ENCODE measurements at regions of chr3 and their contacts with region 1.

Region 1: GRCh38 chr3:118884748-118885206 is 149.9 kb downstream of the IGSF11 start:
- DNase-seq: peak; percentile 18
- ATAC-seq: peak; percentile 96
- H3K4me3 ChIP-seq: no peak overlapping the region
- H3K27ac ChIP-seq: no peak overlapping the region
- H3K4me1 ChIP-seq: no peaks in the 10 kb centered on the region
- H3K27me3 ChIP-seq: peaks cover 0 to 4% of the 10 kb centered on the region in 2 experiments; a peak in 1 of 5 replicates
- CTCF ChIP-seq: peak; percentile 72
- EP300 ChIP-seq: no peak
- POLR2A ChIP-seq: no peak
- RAD21 ChIP-seq: no peak

Region 2: GRCh38 chr3:118997190-118997589 is 112.4 kb after region 1 on chr3:
- CTCF ChIA-PET with region 1: no interaction called
- POLR2A ChIA-PET with region 1: no interaction called
- in situ Hi-C with region 1: no loop called
- intact Hi-C with region 1: no loop called
- DNase-seq: no peak
- ATAC-seq: no peak
- H3K4me3 ChIP-seq: no peak overlapping the region
- H3K27ac ChIP-seq: no peak overlapping the region
- H3K4me1 ChIP-seq: no peaks in the 10 kb centered on the region
- H3K27me3 ChIP-seq: no peaks in the 10 kb centered on the region
- CTCF ChIP-seq: no peak
- EP300 ChIP-seq: no peak
- POLR2A ChIP-seq: no peak
- RAD21 ChIP-seq: no peak

Region 3: DNA sequence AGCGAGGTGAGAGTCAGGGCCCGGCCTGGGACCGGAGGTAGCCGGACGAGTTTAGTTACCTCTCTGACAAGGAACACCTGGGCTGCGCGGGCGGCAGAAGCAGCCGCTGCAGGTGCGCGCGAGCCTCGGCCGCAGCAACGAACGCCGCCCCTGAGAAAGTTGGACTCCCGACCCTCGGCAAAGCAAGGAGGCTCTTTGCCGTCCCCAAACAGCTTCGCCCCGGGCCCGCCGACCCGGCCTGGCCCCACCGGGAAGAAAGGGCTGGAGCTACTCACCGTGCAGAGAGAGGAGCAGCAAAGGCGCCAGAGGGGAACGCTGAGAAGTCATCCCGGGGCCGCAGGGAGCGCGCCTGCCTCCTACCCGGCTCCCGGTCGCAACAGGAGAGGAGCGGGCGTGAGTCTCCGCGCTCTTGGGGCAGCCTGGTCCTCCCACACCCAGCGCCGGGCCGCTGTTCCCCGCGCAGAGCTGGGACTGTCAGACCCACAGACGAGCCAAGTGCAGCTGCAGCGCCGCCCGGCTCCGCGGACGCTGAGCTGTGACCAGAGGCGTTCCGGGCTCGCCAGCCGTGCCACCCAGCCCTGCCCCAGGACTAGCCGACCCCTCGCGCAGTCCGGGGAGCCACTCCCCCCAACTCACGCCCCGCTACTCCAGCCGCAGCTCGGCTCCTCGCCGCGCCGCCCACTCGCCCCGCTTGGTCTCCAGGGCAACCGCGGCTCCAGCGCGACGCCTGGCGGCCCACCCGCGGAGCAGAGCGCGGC is 149.7 kb after region 1 on chr3 and contains the start of gene IGSF11:
- CTCF ChIA-PET with region 1: interaction called, 5 read pairs
- POLR2A ChIA-PET with region 1: interaction called, 3 read pairs
- in situ Hi-C with region 1: loop called (anchors 10 kb)
- intact Hi-C with region 1: loop called (anchors 1 kb)
- DNase-seq: peak; percentile 9
- ATAC-seq: peak; percentile 98
- H3K4me3 ChIP-seq: peak within 1 kb of the TSS; percentile 56 to 74 (median 61)
- H3K27ac ChIP-seq: no peak within 1 kb of the TSS
- H3K4me1 ChIP-seq: no peaks in the 10 kb centered on the region
- H3K27me3 ChIP-seq: peaks cover 6 to 32% of the 10 kb centered on the region in 2 experiments; a peak in 4 of 5 replicates
- CTCF ChIP-seq: peak; percentile 67
- EP300 ChIP-seq: no peak
- POLR2A ChIP-seq: no peak
- RAD21 ChIP-seq: peak; percentile 77; the same call in 1 of the 2 replicates
- total RNA-seq, gene IGSF11: not detected in 2 replicates

Region 4: GRCh38 chr3:119098619-119099222 is 213.9 kb after region 1 on chr3:
- CTCF ChIA-PET with region 1: interaction called, 26 read pairs
- POLR2A ChIA-PET with region 1: no interaction called
- in situ Hi-C with region 1: loop called (anchors 5 kb)
- intact Hi-C with region 1: loop called (anchors 1 kb)
- DNase-seq: peak; percentile 18
- ATAC-seq: no peak
- H3K4me3 ChIP-seq: no peak overlapping the region
- H3K27ac ChIP-seq: no peak overlapping the region
- H3K4me1 ChIP-seq: no peaks in the 10 kb centered on the region
- H3K27me3 ChIP-seq: no peaks in the 10 kb centered on the region
- CTCF ChIP-seq: peak; percentile 62
- EP300 ChIP-seq: no peak
- POLR2A ChIP-seq: no peak
- RAD21 ChIP-seq: peak; percentile 28; the same call in 1 of the 2 replicates

Region 5: GRCh38 chr3:119122109-119122749 is 237.5 kb after region 1 on chr3:
- CTCF ChIA-PET with region 1: no interaction called
- POLR2A ChIA-PET with region 1: no interaction called
- in situ Hi-C with region 1: no loop called
- intact Hi-C with region 1: no loop called
- DNase-seq: no peak
- ATAC-seq: no peak
- H3K4me3 ChIP-seq: no peak overlapping the region
- H3K27ac ChIP-seq: no peak overlapping the region
- H3K4me1 ChIP-seq: no peaks in the 10 kb centered on the region
- H3K27me3 ChIP-seq: no peaks in the 10 kb centered on the region
- CTCF ChIP-seq: no peak
- EP300 ChIP-seq: no peak
- POLR2A ChIP-seq: no peak
- RAD21 ChIP-seq: no peak

Measured in HepG2 (cell line).